ENCODE measurements at regions of chr3 and their contacts with region 1.

Region 1: GRCh38 chr3:131107637-131108433 is 81.2 kb downstream of the NEK11 start:
- DNase-seq: peak; percentile 78
- ATAC-seq: peak; percentile 93
- H3K4me3 ChIP-seq: peak overlapping the region; percentile 6; the same call in 1 of the 2 replicates
- H3K27ac ChIP-seq: peak overlapping the region; percentile 67
- H3K4me1 ChIP-seq: peaks cover 32% of the 10 kb centered on the region
- H3K27me3 ChIP-seq: no peaks in the 10 kb centered on the region
- CTCF ChIP-seq: no peak

Region 2: GRCh38 chr3:130820976-130821375 is 286.9 kb before region 1 on chr3:
- CTCF ChIA-PET with region 1: no interaction called
- POLR2A ChIA-PET with region 1: no interaction called
- intact Hi-C with region 1: no loop called
- DNase-seq: peak; percentile 83
- ATAC-seq: peak; percentile 80
- H3K4me3 ChIP-seq: no peak overlapping the region
- H3K27ac ChIP-seq: no peak overlapping the region
- H3K4me1 ChIP-seq: peaks cover 1% of the 10 kb centered on the region; the same call in 1 of the 2 replicates
- H3K27me3 ChIP-seq: no peaks in the 10 kb centered on the region
- CTCF ChIP-seq: no peak

Region 3: GRCh38 chr3:131216801-131217200 is 109.0 kb after region 1 on chr3:
- CTCF ChIA-PET with region 1: no interaction called
- POLR2A ChIA-PET with region 1: no interaction called
- intact Hi-C with region 1: loop called (anchors 2 kb)
- DNase-seq: peak; percentile 80
- ATAC-seq: peak; percentile 73
- H3K4me3 ChIP-seq: peak overlapping the region; percentile 44; the same call in 1 of the 2 replicates
- H3K27ac ChIP-seq: peak overlapping the region; percentile 100
- H3K4me1 ChIP-seq: peaks cover 25% of the 10 kb centered on the region
- H3K27me3 ChIP-seq: no peaks in the 10 kb centered on the region
- CTCF ChIP-seq: no peak

Region 4: GRCh38 chr3:131361464-131362421 is 253.9 kb after region 1 on chr3:
- CTCF ChIA-PET with region 1: no interaction called
- POLR2A ChIA-PET with region 1: no interaction called
- intact Hi-C with region 1: no loop called
- DNase-seq: peak; percentile 88
- ATAC-seq: peak; percentile 95
- H3K4me3 ChIP-seq: peak overlapping the region; percentile 69
- H3K27ac ChIP-seq: peak overlapping the region; percentile 36
- H3K4me1 ChIP-seq: peaks cover 11% of the 10 kb centered on the region
- H3K27me3 ChIP-seq: no peaks in the 10 kb centered on the region
- CTCF ChIP-seq: no peak

Measured in PC-3 (cell line).